A549 (cell line): ENCODE measurements at regions of chr5 and their contacts with region 1.

Region 1: DNA sequence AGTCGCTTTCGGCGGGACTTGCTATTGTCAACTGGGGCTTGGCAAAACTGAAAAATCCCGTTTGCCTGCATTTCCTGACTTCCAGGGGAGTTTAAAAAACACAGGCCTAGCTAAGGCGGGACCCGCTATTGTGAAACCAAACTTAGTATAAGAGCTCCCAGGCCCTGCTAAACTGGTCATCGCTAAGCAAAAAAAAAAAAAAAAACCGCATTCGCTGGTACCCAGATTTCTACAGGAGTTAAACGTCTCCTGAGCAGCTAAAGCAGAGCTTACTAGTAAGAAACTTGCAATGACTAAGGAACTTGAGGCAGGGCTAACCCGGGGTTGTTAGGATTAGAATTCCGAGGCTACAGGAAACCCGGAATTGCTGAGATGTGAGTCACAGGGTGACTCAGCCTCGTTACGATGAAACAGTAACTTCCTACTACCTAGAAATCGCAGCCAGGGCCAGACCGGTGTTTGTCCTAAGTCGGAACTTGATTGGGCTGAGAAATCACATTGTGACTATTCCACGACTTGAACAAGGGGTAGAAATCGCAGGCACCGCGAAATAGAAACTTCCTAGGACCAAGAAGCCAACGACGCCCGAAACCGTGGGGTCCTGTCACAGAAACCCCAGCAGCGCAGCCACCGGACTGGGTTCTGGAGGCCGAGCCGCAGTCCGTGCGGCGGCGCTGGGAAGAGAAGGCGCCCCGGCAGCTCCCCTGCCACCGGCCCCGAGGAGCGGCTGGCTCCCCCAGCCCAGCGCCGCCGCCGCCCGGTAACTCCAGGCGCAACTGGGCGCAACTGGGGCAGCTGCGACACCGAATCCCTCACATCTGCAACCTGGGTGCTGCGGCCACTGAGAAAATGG is 89.5 kb downstream of the ANXA2R start:
- DNase-seq: peak; percentile 97 to 99
- ATAC-seq: peak; percentile 93 to 94
- H3K4me3 ChIP-seq: peak overlapping the region; percentile 37
- H3K27ac ChIP-seq: peak overlapping the region; percentile 95 to 99
- H3K4me1 ChIP-seq: peaks cover 19% of the 10 kb centered on the region
- CTCF ChIP-seq: no peak
- EP300 ChIP-seq: peak; percentile 51 to 63; a peak in 2 of 5 replicates
- POLR2A ChIP-seq: no peak
- RAD21 ChIP-seq: 0 out of 5 replicates have a peak, but pooled peaks of 1 of the 2 experiments have one; percentile 27

Region 2: DNA sequence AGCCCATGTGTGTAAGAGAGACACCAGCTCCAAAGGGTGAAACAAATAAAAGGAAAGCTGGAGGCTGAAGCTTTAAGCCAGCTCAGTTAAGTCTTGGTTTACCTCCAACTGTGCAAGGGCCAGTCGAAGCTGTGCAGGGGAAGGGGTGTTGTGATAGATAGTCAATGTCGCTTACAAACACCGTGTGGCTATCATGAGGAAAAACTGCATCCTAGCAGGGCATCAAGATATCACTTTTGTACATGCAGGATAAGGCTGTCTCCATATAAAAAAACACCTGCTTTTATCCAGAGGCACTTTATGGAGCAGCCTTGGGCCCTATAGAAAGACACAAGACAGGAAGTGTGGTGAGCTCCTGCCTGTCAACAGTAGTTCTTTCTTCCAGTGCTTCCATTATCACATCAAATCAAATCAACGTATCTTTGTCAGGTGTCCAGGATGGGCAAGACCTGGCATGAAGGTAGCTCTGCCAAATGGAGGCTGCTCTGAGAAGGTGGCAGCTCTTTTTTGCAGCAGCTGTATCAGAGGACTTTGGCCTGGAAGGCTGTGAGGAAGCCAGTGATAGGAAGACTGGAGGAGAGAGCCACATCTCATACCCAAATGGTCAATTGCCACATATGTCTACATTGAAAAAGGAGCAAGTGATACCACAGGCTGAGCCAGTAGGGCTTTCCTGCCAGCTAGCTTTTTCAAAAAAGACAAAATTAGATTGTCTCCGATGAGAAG is 109.7 kb before region 1 on chr5:
- CTCF ChIA-PET with region 1: no interaction called
- POLR2A ChIA-PET with region 1: no interaction called
- DNase-seq: no peak
- ATAC-seq: no peak
- H3K4me3 ChIP-seq: no peak overlapping the region
- H3K27ac ChIP-seq: no peak overlapping the region
- H3K4me1 ChIP-seq: no peaks in the 10 kb centered on the region
- CTCF ChIP-seq: no peak
- EP300 ChIP-seq: no peak
- POLR2A ChIP-seq: no peak
- RAD21 ChIP-seq: no peak

Region 3: DNA sequence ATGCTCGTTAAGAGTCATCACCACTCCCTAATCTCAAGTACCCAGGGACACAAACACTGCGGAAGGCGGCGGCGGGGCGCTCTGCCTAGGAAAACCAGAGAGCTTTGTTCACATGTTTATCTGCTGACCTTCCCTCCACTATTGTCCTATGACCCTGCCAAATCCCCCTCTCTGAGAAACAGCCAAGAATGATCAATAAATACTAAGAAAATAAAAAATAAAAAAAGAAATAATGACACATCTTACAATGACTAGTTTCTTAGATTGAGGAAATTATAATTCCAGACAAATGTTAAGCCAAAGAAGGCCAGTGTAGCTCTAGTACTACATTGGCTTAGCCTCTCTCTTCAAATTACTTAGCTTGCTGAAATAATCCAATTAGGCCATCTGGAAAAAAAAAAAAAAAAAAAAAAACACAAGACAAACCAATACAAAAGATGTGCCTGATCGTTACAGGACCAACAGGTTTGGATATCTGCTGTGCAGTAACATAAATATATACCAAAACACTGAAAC is 31.5 kb after region 1 on chr5:
- CTCF ChIA-PET with region 1: interaction called, 5 read pairs
- POLR2A ChIA-PET with region 1: interaction called, 11 read pairs
- DNase-seq: peak in 1 of 2 experiments; percentile 79
- ATAC-seq: peak in 1 of 2 experiments; percentile 21; a peak in 2 of 6 replicates
- H3K4me3 ChIP-seq: no peak overlapping the region
- H3K27ac ChIP-seq: peak overlapping the region; percentile 77 to 85
- H3K4me1 ChIP-seq: peaks cover 45% of the 10 kb centered on the region
- CTCF ChIP-seq: no peak
- EP300 ChIP-seq: no peak
- POLR2A ChIP-seq: no peak
- RAD21 ChIP-seq: no peak

Region 4: GRCh38 chr5:43008369-43009153 is 57.9 kb after region 1 on chr5:
- CTCF ChIA-PET with region 1: interaction called, 5 read pairs
- POLR2A ChIA-PET with region 1: interaction called, 23 read pairs
- DNase-seq: peak; percentile 84 to 98
- ATAC-seq: peak; percentile 81 to 85
- H3K4me3 ChIP-seq: peak overlapping the region; percentile 56
- H3K27ac ChIP-seq: peak overlapping the region; percentile 93 to 95
- H3K4me1 ChIP-seq: peaks cover 13% of the 10 kb centered on the region
- CTCF ChIP-seq: peak; percentile 34
- EP300 ChIP-seq: no peak
- POLR2A ChIP-seq: peak; percentile 64
- RAD21 ChIP-seq: peak in 1 of 2 experiments; percentile 34; a peak in 3 of 5 replicates